ENCODE measurements at regions of chrX and their contacts with region 1.

Region 1: GRCh38 chrX:134807039-134807731 is 148.9 kb upstream of the PLAC1 start:
- DNase-seq: peak; percentile 70 to 97 (median 84)
- ATAC-seq: peak; percentile 86
- H3K4me3 ChIP-seq: peak overlapping the region; percentile 92 to 95
- H3K4me3 Mint-ChIP-seq: peak overlapping the region; percentile 97
- H3K27ac ChIP-seq: peak overlapping the region; percentile 99
- H3K27ac Mint-ChIP-seq: peak overlapping the region; percentile 99
- H3K4me1 ChIP-seq: no peaks in the 10 kb centered on the region
- H3K4me1 Mint-ChIP-seq: peaks cover 24% of the 10 kb centered on the region
- H3K27me3 ChIP-seq: no peaks in the 10 kb centered on the region
- H3K27me3 Mint-ChIP-seq: no peaks in the 10 kb centered on the region
- CTCF ChIP-seq: no peak

Region 2: GRCh38 chrX:134460005-134460861 is 347.0 kb before region 1 on chrX and contains the start of gene HPRT1:
- CTCF ChIA-PET with region 1: no interaction called
- POLR2A ChIA-PET with region 1: no interaction called
- intact Hi-C with region 1: loop called in 1 of 2 experiments (anchors 1 kb)
- DNase-seq: peak; percentile 57 to 88 (median 75)
- ATAC-seq: peak; percentile 99
- H3K4me3 ChIP-seq: peak within 1 kb of the TSS; percentile 55 to 63
- H3K4me3 Mint-ChIP-seq: peak within 1 kb of the TSS; percentile 88
- H3K27ac ChIP-seq: peak within 1 kb of the TSS; percentile 39 to 51
- H3K27ac Mint-ChIP-seq: peak within 1 kb of the TSS; percentile 71
- H3K4me1 ChIP-seq: peaks cover 7% of the 10 kb centered on the region
- H3K4me1 Mint-ChIP-seq: peaks cover 12% of the 10 kb centered on the region
- H3K27me3 ChIP-seq: no peaks in the 10 kb centered on the region
- H3K27me3 Mint-ChIP-seq: no peaks in the 10 kb centered on the region
- CTCF ChIP-seq: no peak
- total RNA-seq, gene HPRT1: 12.3 to 12.6 TPM

Region 3: GRCh38 chrX:135003876-135004623 is 196.9 kb after region 1 on chrX:
- CTCF ChIA-PET with region 1: no interaction called
- POLR2A ChIA-PET with region 1: no interaction called
- intact Hi-C with region 1: loop called in 1 of 2 experiments (anchors 5 kb)
- DNase-seq: peak; percentile 72 to 93 (median 89)
- ATAC-seq: peak; percentile 98
- H3K4me3 ChIP-seq: peak overlapping the region; percentile 52 to 57
- H3K4me3 Mint-ChIP-seq: peak overlapping the region; percentile 88
- H3K27ac ChIP-seq: peak overlapping the region; percentile 38 to 72
- H3K27ac Mint-ChIP-seq: peak overlapping the region; percentile 91
- H3K4me1 ChIP-seq: peaks cover 9% of the 10 kb centered on the region
- H3K4me1 Mint-ChIP-seq: peaks cover 12% of the 10 kb centered on the region
- H3K27me3 ChIP-seq: no peaks in the 10 kb centered on the region
- H3K27me3 Mint-ChIP-seq: no peaks in the 10 kb centered on the region
- CTCF ChIP-seq: no peak

Region 4: DNA sequence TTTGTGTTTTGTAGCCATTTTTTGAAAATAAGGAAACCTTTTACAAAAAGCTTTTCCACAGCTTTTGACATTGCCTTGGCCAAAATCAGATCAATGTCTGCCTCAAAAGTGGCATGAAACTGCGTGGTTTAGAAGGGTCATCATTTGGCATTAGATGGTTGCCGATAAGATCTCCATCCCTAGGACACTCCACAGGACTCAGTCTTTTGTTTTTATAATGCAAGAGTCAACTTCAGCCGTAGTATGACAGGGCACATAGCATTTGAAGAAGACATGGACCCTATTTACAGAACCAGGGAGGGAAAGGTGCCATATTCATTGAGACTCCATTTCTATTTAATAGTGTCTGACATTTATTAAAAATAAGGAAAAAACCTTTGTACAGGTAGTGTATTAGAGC is 243.4 kb after region 1 on chrX:
- CTCF ChIA-PET with region 1: no interaction called
- POLR2A ChIA-PET with region 1: no interaction called
- intact Hi-C with region 1: loop called in 1 of 2 experiments (anchors 5 kb)
- DNase-seq: no peak
- ATAC-seq: no peak
- H3K4me3 ChIP-seq: no peak overlapping the region
- H3K4me3 Mint-ChIP-seq: peak overlapping the region; percentile 86
- H3K27ac ChIP-seq: no peak overlapping the region
- H3K27ac Mint-ChIP-seq: peak overlapping the region; percentile 71
- H3K4me1 ChIP-seq: peaks cover 15% of the 10 kb centered on the region
- H3K4me1 Mint-ChIP-seq: peaks cover 24% of the 10 kb centered on the region
- H3K27me3 ChIP-seq: no peaks in the 10 kb centered on the region
- H3K27me3 Mint-ChIP-seq: no peaks in the 10 kb centered on the region
- CTCF ChIP-seq: no peak

Region 5: DNA sequence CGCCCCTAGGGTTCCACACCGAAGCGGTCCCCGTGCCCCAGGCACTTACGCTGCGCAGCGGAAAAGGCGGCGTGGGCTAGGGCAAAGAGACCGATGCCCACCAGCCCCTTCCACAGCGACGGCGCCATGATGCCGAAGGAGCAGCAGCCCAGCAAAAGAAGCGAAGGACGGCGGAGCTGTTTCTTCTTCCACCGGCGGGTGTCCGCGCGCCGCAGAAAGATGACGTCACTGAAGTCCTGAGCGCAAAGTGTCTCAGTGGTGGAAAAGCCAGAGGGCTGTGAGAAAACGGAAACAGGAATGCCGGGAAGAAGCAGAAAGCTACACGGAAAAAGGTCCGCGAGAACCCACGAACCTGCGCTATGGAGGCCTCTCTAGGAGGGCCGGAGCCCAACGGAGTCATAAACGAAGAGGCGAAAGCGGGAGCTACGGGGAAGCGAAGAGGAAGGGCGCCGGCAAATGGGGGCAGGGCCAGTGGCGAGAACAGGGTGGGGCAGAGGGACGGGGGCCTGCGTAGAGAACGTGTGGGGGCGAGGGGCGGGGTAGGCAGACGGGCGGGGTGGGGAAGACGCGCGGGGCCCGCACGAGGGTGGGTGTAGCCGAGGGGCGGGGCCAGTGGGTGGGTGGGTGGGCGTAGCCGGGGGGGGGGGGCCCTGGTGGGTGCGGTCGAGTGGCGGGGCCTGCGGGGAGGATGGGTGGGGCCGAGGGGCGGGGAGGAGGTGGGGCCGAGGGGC is 1166.5 kb after region 1 on chrX and contains the start of gene MMGT1:
- CTCF ChIA-PET with region 1: no interaction called
- POLR2A ChIA-PET with region 1: no interaction called
- intact Hi-C with region 1: loop called in 1 of 2 experiments (anchors 5 kb)
- DNase-seq: peak; percentile 62 to 92 (median 78)
- ATAC-seq: peak; percentile 87
- H3K4me3 ChIP-seq: peak within 1 kb of the TSS; percentile 91 to 99
- H3K4me3 Mint-ChIP-seq: peak within 1 kb of the TSS; percentile 97
- H3K27ac ChIP-seq: peak within 1 kb of the TSS; percentile 93 to 94
- H3K27ac Mint-ChIP-seq: peak within 1 kb of the TSS; percentile 96
- H3K4me1 ChIP-seq: peaks cover 14% of the 10 kb centered on the region
- H3K4me1 Mint-ChIP-seq: peaks cover 36% of the 10 kb centered on the region
- H3K27me3 ChIP-seq: no peaks in the 10 kb centered on the region
- H3K27me3 Mint-ChIP-seq: no peaks in the 10 kb centered on the region
- CTCF ChIP-seq: no peak
- total RNA-seq, gene MMGT1: 35.0 to 35.6 TPM

Measured in CD8-positive, alpha-beta T cell (primary cell).